Left ventricle myocardium superior (tissue), 1 donor: ENCODE measurements at regions of chr7 and their contacts with region 1.

Region 1: GRCh38 chr7:49848211-49848841 is 74.9 kb downstream of the VWC2 start:
- DNase-seq: no peak
- ATAC-seq: no peak

Region 2: DNA sequence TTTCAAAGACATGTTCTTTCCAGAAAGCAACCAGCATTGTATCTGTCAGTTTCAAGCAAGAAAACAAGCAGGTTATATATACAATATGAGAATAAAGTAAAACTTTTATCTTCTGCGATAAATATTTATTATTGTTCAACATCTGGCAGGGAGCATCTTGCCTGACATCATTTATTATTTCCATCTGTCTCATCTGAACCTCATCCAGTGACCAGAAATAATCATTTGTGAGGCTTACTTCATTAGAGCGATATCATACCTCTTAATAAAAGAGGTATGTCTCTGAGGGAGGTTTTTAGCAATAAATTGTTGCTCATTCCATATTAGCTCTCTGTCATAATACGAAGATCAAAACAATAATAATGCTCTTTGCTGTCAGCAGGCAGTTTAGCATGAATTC is 697.8 kb before region 1 on chr7:
- intact Hi-C with region 1: no loop called
- DNase-seq: no peak
- ATAC-seq: no peak

Region 3: GRCh38 chr7:49486974-49487829 is 361.1 kb before region 1 on chr7:
- intact Hi-C with region 1: loop called (anchors 5 kb)
- DNase-seq: no peak
- ATAC-seq: no peak

Region 4: DNA sequence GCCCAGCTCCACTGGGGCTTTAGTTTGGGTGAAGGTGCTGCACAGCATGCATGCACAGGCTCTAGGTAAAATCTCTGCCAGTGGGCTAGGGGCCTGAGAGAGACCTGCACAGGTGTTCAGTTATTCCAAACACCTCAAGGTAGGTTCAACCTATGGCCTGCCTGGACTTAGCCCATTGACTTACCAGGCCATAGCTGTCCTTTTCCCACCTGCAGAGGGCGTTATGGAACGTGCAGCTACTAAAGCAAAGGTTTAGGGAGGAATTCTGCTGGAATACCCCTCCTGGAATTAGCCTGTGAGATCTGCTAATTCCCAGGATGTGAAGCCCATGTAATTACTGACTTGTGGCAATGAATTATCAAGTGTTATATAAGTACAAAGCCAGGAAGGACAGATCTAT is 71.3 kb before region 1 on chr7:
- intact Hi-C with region 1: no loop called
- DNase-seq: no peak
- ATAC-seq: peak; percentile 7

Region 5: GRCh38 chr7:49927631-49928030 is 79.3 kb after region 1 on chr7:
- intact Hi-C with region 1: no loop called
- DNase-seq: no peak
- ATAC-seq: no peak

Region 6: GRCh38 chr7:50056131-50056530 is 207.8 kb after region 1 on chr7:
- intact Hi-C with region 1: no loop called
- DNase-seq: no peak
- ATAC-seq: no peak